Endothelial cell of umbilical vein (primary cell): ENCODE measurements at regions of chr11 and their contacts with region 1.

Region 1: DNA sequence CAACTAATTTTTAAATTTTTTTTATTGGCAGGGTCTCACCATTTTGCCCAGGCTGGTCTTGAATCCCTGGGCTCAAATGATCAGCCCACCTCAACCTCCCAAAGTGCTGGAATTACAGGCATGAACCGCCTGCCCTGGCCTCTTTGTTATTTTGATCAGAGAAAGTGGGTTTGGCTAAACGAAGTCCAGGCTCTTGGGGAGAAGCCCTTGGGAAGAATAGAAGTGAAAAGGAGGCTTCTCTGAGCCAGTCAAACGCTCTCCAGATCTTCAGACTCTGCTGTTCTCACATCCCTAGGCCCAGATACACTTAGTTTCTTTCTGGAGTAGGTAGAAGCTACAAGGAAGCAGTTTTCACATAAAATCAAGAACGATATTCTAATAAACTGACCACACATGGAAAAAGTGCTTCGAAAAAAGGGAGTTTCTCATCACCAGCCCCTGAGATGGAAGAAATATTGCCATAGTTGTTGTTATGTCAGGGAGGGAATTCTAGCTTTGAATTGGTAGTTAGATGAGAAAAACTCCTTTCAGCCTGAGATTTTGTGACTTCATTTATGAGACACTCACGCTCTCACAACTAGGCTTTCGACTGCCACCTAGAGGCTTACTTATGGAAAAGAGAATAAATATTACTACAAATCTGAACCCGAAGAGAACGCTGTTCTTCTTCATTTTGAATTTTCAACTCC is 41.7 kb upstream of the AQP11 start:
- DNase-seq: peak; percentile 58
- H3K4me3 ChIP-seq: no peak overlapping the region
- H3K27ac ChIP-seq: no peak overlapping the region
- H3K4me1 ChIP-seq: no peaks in the 10 kb centered on the region
- H3K27me3 ChIP-seq: no peaks in the 10 kb centered on the region
- CTCF ChIP-seq: peak; percentile 40 to 53
- POLR2A ChIP-seq: no peak

Region 2: GRCh38 chr11:77047007-77047927 is 500.7 kb before region 1 on chr11:
- CTCF ChIA-PET with region 1: interaction called, 17 read pairs
- POLR2A ChIA-PET with region 1: no interaction called
- dilution Hi-C with region 1: no loop called
- intact Hi-C with region 1: loop called (anchors 1 kb)
- DNase-seq: peak; percentile 97
- H3K4me3 ChIP-seq: peak overlapping the region; percentile 28 to 36 (median 31)
- H3K27ac ChIP-seq: no peak overlapping the region
- H3K4me1 ChIP-seq: peaks cover 5% of the 10 kb centered on the region
- H3K27me3 ChIP-seq: peaks cover 4 to 10% of the 10 kb centered on the region in 2 experiments
- CTCF ChIP-seq: peak; percentile 48 to 59
- POLR2A ChIP-seq: no peak

Region 3: GRCh38 chr11:77187776-77188632 is 360.0 kb before region 1 on chr11:
- CTCF ChIA-PET with region 1: interaction called, 14 read pairs
- POLR2A ChIA-PET with region 1: no interaction called
- dilution Hi-C with region 1: no loop called
- intact Hi-C with region 1: no loop called
- DNase-seq: peak; percentile 75
- H3K4me3 ChIP-seq: no peak overlapping the region
- H3K27ac ChIP-seq: no peak overlapping the region
- H3K4me1 ChIP-seq: no peaks in the 10 kb centered on the region
- H3K27me3 ChIP-seq: no peaks in the 10 kb centered on the region
- CTCF ChIP-seq: peak; percentile 81 to 94
- POLR2A ChIP-seq: no peak

Region 4: DNA sequence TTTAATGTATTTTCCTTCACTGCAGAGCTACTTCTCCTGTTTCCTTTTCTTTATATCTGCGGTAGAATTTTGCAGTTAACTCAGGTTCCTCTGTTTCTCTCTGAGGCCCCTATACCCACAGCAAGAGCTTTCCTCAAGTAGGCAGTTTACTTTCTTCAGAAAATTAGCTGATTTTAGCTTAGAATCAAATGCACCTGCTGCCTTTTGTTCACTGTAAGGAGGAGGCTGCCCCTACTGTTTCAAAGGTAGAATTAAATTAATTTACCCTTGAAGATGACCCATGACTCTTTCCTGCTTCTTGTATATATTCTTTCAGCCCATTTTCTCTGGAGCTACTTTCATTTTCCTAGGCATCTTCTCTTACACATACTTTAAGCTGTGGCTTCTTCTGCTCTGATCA is 177.8 kb before region 1 on chr11:
- CTCF ChIA-PET with region 1: no interaction called
- POLR2A ChIA-PET with region 1: no interaction called
- dilution Hi-C with region 1: no loop called
- intact Hi-C with region 1: loop called (anchors 10 kb)
- DNase-seq: no peak
- H3K4me3 ChIP-seq: no peak overlapping the region
- H3K27ac ChIP-seq: no peak overlapping the region
- H3K4me1 ChIP-seq: no peaks in the 10 kb centered on the region
- H3K27me3 ChIP-seq: no peaks in the 10 kb centered on the region
- CTCF ChIP-seq: no peak
- POLR2A ChIP-seq: no peak

Region 5: DNA sequence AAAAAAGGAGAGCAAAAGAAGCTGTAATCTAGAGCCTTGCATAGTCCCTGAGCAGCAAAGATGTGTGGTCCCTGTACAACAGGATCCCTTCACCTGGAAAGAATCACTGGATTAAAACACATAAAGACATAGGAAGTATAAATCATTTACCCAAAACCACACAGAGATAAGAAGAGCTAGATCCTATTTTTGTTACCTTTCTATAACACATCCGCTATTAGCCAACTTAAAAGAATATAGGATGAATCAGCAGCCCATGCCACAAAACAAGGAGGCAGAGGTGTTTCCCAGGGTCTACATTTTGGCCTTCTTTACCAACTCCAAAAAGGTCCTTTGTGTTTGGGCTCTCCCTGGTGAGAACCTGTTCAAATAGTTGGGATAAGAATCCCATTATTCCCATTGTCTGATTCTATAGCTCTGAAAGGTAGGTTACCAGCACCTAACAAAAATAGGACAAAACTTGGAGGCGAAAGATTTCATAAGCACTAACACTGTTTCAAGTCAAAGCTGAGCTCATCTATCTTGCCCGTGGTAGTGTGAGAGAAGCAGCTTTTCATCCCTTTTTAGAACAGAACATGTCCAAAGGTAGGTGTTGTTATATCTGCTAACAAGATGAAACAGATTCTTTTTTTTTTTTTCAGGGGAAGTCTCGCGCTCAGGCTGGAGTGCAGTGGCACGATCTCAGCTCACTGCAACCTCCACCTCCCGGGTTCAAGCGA is 100.9 kb before region 1 on chr11:
- CTCF ChIA-PET with region 1: interaction called, 10 read pairs
- POLR2A ChIA-PET with region 1: no interaction called
- dilution Hi-C with region 1: no loop called
- intact Hi-C with region 1: no loop called
- DNase-seq: no peak
- H3K4me3 ChIP-seq: no peak overlapping the region
- H3K27ac ChIP-seq: no peak overlapping the region
- H3K4me1 ChIP-seq: no peaks in the 10 kb centered on the region
- H3K27me3 ChIP-seq: peaks cover 3 to 16% of the 10 kb centered on the region in 2 experiments
- CTCF ChIP-seq: no peak
- POLR2A ChIP-seq: no peak

Region 6: GRCh38 chr11:77487790-77488189 is 60.2 kb before region 1 on chr11:
- CTCF ChIA-PET with region 1: interaction called, 13 read pairs
- POLR2A ChIA-PET with region 1: no interaction called
- dilution Hi-C with region 1: no loop called
- intact Hi-C with region 1: no loop called
- DNase-seq: no peak
- H3K4me3 ChIP-seq: no peak overlapping the region
- H3K27ac ChIP-seq: no peak overlapping the region
- H3K4me1 ChIP-seq: no peaks in the 10 kb centered on the region
- H3K27me3 ChIP-seq: peaks cover 3 to 8% of the 10 kb centered on the region in 2 experiments
- CTCF ChIP-seq: no peak
- POLR2A ChIP-seq: no peak

Region 7: GRCh38 chr11:77619576-77620198 is 71.7 kb after region 1 on chr11:
- CTCF ChIA-PET with region 1: interaction called, 27 read pairs
- POLR2A ChIA-PET with region 1: no interaction called
- dilution Hi-C with region 1: no loop called
- intact Hi-C with region 1: loop called (anchors 1 kb)
- DNase-seq: peak; percentile 57
- H3K4me3 ChIP-seq: no peak overlapping the region
- H3K27ac ChIP-seq: no peak overlapping the region
- H3K4me1 ChIP-seq: no peaks in the 10 kb centered on the region
- H3K27me3 ChIP-seq: no peaks in the 10 kb centered on the region
- CTCF ChIP-seq: peak; percentile 43 to 59
- POLR2A ChIP-seq: no peak

Region 8: DNA sequence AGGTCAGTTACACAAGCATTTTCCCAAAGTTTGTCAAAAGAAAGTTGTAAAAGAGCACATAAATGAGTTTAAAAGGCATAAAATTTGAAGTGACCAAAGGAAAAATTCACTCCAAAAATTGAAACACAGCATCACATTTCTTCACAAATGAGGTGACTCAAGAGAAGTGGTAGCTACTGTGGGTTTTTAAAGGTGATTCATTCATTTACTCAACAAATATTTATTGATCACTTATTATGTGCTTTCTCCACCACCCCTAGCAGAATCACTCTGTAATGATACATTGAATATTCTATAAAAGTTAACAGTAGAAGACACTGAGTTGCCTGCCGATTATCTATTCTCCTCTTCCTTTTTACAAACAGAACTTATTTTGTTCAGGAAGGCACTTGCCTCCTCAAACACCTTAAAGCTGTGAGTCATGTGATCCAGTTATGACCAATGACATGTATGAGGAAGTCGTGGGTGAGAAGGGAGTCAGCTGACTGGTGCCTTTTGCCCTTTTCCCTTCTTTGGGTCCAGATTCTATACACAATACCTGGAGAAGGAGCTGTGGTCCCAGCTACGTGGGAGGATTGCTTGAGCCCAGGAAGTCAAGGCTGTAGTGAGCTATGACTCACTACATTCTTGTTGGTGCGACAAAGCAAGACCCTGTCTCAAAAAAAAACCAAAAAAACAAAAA is 157.3 kb after region 1 on chr11:
- CTCF ChIA-PET with region 1: no interaction called
- POLR2A ChIA-PET with region 1: no interaction called
- dilution Hi-C with region 1: no loop called
- intact Hi-C with region 1: no loop called
- DNase-seq: peak; percentile 5
- H3K4me3 ChIP-seq: no peak overlapping the region
- H3K27ac ChIP-seq: no peak overlapping the region
- H3K4me1 ChIP-seq: no peaks in the 10 kb centered on the region
- H3K27me3 ChIP-seq: no peaks in the 10 kb centered on the region
- CTCF ChIP-seq: no peak
- POLR2A ChIP-seq: no peak